Activated T-helper 1 cell treated with anti-CD3 and anti-CD28 coated beads, Interleukin-12 subunit alpha, Interleukin-12 subunit beta, Interleukin-2, Interleukin-4 antibody, amounts not matched to agents 30 ng/mL and 10 ng/mL and 1 ng/mL, durations not matched to agents 14 hours and 24 hours and 36 hours (primary cell): ENCODE measurements at regions of chr10 and their contacts with region 1.

Region 1: DNA sequence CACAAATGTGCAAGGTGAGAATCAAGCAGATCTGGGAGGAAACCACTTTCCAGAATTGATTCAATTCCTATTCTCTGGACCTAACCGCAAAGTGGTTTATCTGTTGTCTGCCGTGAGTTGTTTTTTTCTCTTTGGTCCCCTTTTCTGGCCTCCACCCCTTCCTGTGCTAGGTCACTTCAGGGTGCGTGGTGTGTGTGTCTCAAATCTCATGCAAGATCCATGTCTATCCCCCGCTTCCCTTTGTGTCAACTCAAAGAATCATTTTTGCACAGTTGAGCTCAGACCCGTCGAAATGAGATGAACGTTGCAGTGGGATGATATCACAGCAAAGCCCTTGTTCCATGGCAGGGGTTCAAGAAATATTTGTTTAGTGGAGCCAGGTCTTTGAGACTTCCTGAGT is 184.5 kb downstream of the GATA3 start:
- DNase-seq: peak; percentile 37
- H3K4me3 Mint-ChIP-seq: peak overlapping the region; percentile 41
- H3K27ac Mint-ChIP-seq: peak overlapping the region; percentile 75
- H3K4me1 Mint-ChIP-seq: peaks cover 66% of the 10 kb centered on the region
- H3K27me3 Mint-ChIP-seq: no peaks in the 10 kb centered on the region

Region 2: GRCh38 chr10:8059959-8060703 is 178.9 kb before region 1 on chr10:
- intact Hi-C with region 1: loop called (anchors 1 kb)
- DNase-seq: peak; percentile 73
- H3K4me3 Mint-ChIP-seq: peak overlapping the region; percentile 98
- H3K27ac Mint-ChIP-seq: peak overlapping the region; percentile 96
- H3K4me1 Mint-ChIP-seq: peaks cover 74% of the 10 kb centered on the region
- H3K27me3 Mint-ChIP-seq: peaks cover 1% of the 10 kb centered on the region

Region 3: GRCh38 chr10:8138471-8138870 is 100.5 kb before region 1 on chr10:
- intact Hi-C with region 1: loop called (anchors 1 kb)
- DNase-seq: no peak
- H3K4me3 Mint-ChIP-seq: peak overlapping the region; percentile 15
- H3K27ac Mint-ChIP-seq: peak overlapping the region; percentile 56
- H3K4me1 Mint-ChIP-seq: peaks cover 57% of the 10 kb centered on the region
- H3K27me3 Mint-ChIP-seq: no peaks in the 10 kb centered on the region

Region 4: DNA sequence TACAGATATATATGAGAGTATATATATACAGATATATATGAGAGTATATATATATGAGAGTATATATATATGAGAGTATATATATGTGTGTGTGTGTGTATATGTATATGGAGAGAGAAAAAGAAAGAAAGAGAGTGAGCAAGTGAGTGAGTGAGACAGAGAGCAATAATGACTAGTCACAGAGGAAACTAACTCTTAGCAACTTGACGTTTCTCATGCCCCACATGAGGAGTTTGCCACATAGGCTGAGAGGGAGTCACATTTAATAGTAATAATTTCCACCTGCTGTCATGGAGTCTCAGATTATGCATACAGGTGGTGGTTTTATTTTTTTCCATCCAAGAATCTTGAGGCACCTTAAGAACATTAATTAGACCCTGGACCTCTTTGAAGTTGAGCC is 15.4 kb after region 1 on chr10:
- intact Hi-C with region 1: loop called (anchors 1 kb)
- DNase-seq: no peak
- H3K4me3 Mint-ChIP-seq: peak overlapping the region; percentile 38
- H3K27ac Mint-ChIP-seq: peak overlapping the region; percentile 77
- H3K4me1 Mint-ChIP-seq: peaks cover 48% of the 10 kb centered on the region
- H3K27me3 Mint-ChIP-seq: no peaks in the 10 kb centered on the region

Region 5: GRCh38 chr10:8331883-8332729 is 93.1 kb after region 1 on chr10:
- intact Hi-C with region 1: loop called (anchors 1 kb)
- DNase-seq: peak; percentile 78
- H3K4me3 Mint-ChIP-seq: peak overlapping the region; percentile 79
- H3K27ac Mint-ChIP-seq: peak overlapping the region; percentile 75
- H3K4me1 Mint-ChIP-seq: peaks cover 58% of the 10 kb centered on the region
- H3K27me3 Mint-ChIP-seq: peaks cover 6% of the 10 kb centered on the region

Region 6: DNA sequence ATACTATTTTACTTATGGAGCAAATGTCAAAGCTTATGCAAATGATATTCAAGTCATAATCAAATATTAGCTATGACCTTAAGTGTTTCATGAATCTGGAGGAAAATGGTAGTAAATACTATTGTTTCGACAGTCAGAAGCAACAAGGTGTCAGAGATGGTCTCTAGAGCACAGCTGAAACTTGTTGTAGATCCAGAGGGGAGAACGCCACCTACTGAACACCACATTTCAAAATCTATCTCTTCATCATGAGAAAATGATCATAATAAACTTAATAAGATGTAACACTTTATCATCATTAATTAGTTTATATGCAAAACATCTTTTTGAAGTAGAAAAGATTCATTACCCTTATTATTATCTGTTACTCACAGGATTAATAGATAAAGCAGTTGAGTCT is 234.2 kb after region 1 on chr10:
- intact Hi-C with region 1: loop called (anchors 5 kb)
- DNase-seq: peak; percentile 5
- H3K4me3 Mint-ChIP-seq: no peak overlapping the region
- H3K27ac Mint-ChIP-seq: no peak overlapping the region
- H3K4me1 Mint-ChIP-seq: peaks cover 8% of the 10 kb centered on the region
- H3K27me3 Mint-ChIP-seq: peaks cover 33% of the 10 kb centered on the region

Region 7: GRCh38 chr10:8835453-8836167 is 596.6 kb after region 1 on chr10:
- intact Hi-C with region 1: no loop called
- DNase-seq: no peak
- H3K4me3 Mint-ChIP-seq: no peak overlapping the region
- H3K27ac Mint-ChIP-seq: no peak overlapping the region
- H3K4me1 Mint-ChIP-seq: no peaks in the 10 kb centered on the region
- H3K27me3 Mint-ChIP-seq: no peaks in the 10 kb centered on the region